ENCODE measurements at regions of chr1 and their contacts with region 1.

Region 1: DNA sequence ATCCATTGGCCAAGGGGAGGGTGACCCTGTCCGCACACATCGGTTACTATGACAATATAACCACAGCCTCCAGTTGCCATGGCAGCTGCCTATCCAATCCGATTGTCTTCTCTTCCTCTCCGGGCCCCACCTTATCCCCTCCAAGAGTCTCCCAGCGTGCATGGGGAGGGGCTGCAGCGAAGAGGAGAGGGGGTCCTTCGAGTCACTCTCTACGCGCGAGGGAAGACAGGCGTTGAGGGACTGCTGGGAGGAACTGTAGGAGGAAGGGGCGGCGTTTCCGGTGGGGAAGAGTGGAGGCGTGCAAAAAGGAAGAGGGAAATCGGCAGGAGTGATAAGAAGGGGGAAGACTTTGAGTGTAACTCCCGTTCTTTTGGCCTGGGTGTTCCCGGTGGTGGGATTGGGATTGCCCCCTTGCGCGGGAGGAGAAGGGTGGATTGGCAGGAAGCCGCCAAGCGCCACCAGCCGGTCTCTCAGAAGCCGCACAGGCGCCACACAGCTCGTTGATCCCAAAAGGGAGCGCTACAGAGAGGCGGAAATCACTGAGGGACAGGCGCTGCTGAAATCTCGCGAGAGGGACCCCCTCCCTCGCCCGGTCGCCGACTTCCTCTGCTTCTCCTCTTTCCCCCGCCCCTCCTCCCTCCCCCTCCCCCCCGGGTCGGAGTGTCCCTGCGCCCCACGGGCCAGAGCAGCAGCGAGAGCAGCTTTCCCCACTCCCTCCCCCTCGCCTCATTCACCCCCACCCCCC is 384 bp upstream of the SMG7 start:
- DNase-seq: peak; percentile 98
- ATAC-seq: peak; percentile 70
- H3K4me3 ChIP-seq: peak overlapping the region; percentile 73 to 89 (median 86)
- H3K4me3 Mint-ChIP-seq: peak overlapping the region; percentile 99
- H3K27ac ChIP-seq: peak overlapping the region; percentile 90 to 99
- H3K27ac Mint-ChIP-seq: peak overlapping the region; percentile 100
- H3K4me1 ChIP-seq: peaks cover 12 to 28% of the 10 kb centered on the region in 2 donors
- H3K4me1 Mint-ChIP-seq: peaks cover 35% of the 10 kb centered on the region
- H3K27me3 ChIP-seq: no peaks in the 10 kb centered on the region
- H3K27me3 Mint-ChIP-seq: no peaks in the 10 kb centered on the region
- CTCF ChIP-seq: no peak

Region 2: GRCh38 chr1:182839209-182840065 is 632.5 kb before region 1 on chr1 and contains the start of gene DHX9:
- CTCF ChIA-PET with region 1: no interaction called
- POLR2A ChIA-PET with region 1: no interaction called
- intact Hi-C with region 1: loop called (anchors 2 kb)
- DNase-seq: peak; percentile 97
- ATAC-seq: peak; percentile 80
- H3K4me3 ChIP-seq: peak within 1 kb of the TSS; percentile 85 to 92 (median 92)
- H3K4me3 Mint-ChIP-seq: peak within 1 kb of the TSS; percentile 92
- H3K27ac ChIP-seq: peak within 1 kb of the TSS; percentile 81 to 85
- H3K27ac Mint-ChIP-seq: peak within 1 kb of the TSS; percentile 97
- H3K4me1 ChIP-seq: peaks cover 22 to 28% of the 10 kb centered on the region in 2 donors
- H3K4me1 Mint-ChIP-seq: peaks cover 35% of the 10 kb centered on the region
- H3K27me3 ChIP-seq: no peaks in the 10 kb centered on the region
- H3K27me3 Mint-ChIP-seq: no peaks in the 10 kb centered on the region
- CTCF ChIP-seq: peak; percentile 43
- total RNA-seq, gene DHX9: 207 and 213 TPM in 2 replicates

Region 3: DNA sequence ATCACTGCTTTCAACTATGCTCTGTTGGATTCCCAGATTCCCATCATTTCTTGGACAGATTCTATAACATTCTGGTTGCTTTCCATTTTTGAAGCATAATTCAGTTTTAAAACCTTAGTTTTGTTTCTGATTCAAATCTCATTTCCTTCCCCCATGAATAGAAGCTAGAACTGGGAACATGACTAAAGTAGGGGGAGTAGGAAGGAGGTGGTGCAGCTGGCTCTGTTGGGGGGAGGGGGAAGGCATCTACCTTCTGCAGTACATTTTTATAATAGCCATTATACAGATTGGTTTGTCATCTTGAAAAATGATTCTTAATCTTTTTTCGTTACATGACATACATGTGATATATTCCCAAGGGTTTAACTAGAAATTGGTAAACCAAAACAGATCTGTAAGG is 48.5 kb after region 1 on chr1:
- CTCF ChIA-PET with region 1: interaction called, 7 read pairs
- POLR2A ChIA-PET with region 1: no interaction called
- intact Hi-C with region 1: loop called (anchors 2 kb)
- DNase-seq: no peak
- ATAC-seq: no peak
- H3K4me3 ChIP-seq: no peak overlapping the region
- H3K4me3 Mint-ChIP-seq: no peak overlapping the region
- H3K27ac ChIP-seq: no peak overlapping the region
- H3K27ac Mint-ChIP-seq: no peak overlapping the region
- H3K4me1 ChIP-seq: no peaks in the 10 kb centered on the region
- H3K4me1 Mint-ChIP-seq: no peaks in the 10 kb centered on the region
- H3K27me3 ChIP-seq: no peaks in the 10 kb centered on the region
- H3K27me3 Mint-ChIP-seq: no peaks in the 10 kb centered on the region
- CTCF ChIP-seq: no peak

Region 4: DNA sequence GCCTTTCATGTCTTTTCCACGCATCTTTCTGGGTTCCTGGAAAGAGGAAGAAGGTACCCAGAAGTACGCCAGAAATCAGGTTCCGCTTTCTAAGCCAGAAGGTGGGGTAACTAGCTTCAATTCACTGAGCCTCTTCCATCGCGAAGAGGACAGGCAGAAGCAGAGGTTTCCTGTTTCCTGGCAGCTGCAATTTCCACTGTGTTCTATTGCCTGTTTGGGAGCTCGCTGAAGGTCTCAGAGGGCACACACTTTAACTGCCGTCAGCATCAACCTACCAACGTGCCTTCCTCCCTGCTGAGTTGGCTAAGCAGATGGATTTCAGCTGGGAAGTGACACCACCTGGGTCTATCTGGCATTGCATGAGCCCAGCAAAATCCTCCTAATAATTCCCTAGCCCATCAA is 108.4 kb after region 1 on chr1:
- CTCF ChIA-PET with region 1: interaction called, 3 read pairs
- POLR2A ChIA-PET with region 1: interaction called, 6 read pairs
- intact Hi-C with region 1: loop called (anchors 2 kb)
- DNase-seq: peak; percentile 85
- ATAC-seq: peak; percentile 89
- H3K4me3 ChIP-seq: peak overlapping the region in 3 of 5 experiments; percentile 5 to 34 (median 10)
- H3K4me3 Mint-ChIP-seq: peak overlapping the region; percentile 83
- H3K27ac ChIP-seq: peak overlapping the region; percentile 66 to 69
- H3K27ac Mint-ChIP-seq: peak overlapping the region; percentile 97
- H3K4me1 ChIP-seq: peaks cover 26 to 32% of the 10 kb centered on the region in 2 donors
- H3K4me1 Mint-ChIP-seq: peaks cover 23% of the 10 kb centered on the region
- H3K27me3 ChIP-seq: no peaks in the 10 kb centered on the region
- H3K27me3 Mint-ChIP-seq: no peaks in the 10 kb centered on the region
- CTCF ChIP-seq: no peak

Region 5: GRCh38 chr1:183622884-183623785 is 151.2 kb after region 1 on chr1:
- CTCF ChIA-PET with region 1: interaction called, 18 read pairs
- POLR2A ChIA-PET with region 1: no interaction called
- intact Hi-C with region 1: loop called (anchors 1 kb)
- DNase-seq: peak; percentile 80
- ATAC-seq: peak; percentile 96
- H3K4me3 ChIP-seq: no peak overlapping the region
- H3K4me3 Mint-ChIP-seq: no peak overlapping the region
- H3K27ac ChIP-seq: peak overlapping the region in 1 of 2 donors; percentile 44
- H3K27ac Mint-ChIP-seq: peak overlapping the region; percentile 42
- H3K4me1 ChIP-seq: peaks cover 2 to 9% of the 10 kb centered on the region in 2 donors
- H3K4me1 Mint-ChIP-seq: peaks cover 20% of the 10 kb centered on the region
- H3K27me3 ChIP-seq: no peaks in the 10 kb centered on the region
- H3K27me3 Mint-ChIP-seq: no peaks in the 10 kb centered on the region
- CTCF ChIP-seq: peak; percentile 80

Region 6: GRCh38 chr1:183901748-183902330 is 429.9 kb after region 1 on chr1:
- CTCF ChIA-PET with region 1: no interaction called
- POLR2A ChIA-PET with region 1: no interaction called
- intact Hi-C with region 1: loop called (anchors 5 kb)
- DNase-seq: no peak
- ATAC-seq: peak; percentile 36
- H3K4me3 ChIP-seq: no peak overlapping the region
- H3K4me3 Mint-ChIP-seq: no peak overlapping the region
- H3K27ac ChIP-seq: no peak overlapping the region
- H3K27ac Mint-ChIP-seq: peak overlapping the region; percentile 5
- H3K4me1 ChIP-seq: peaks cover 9% of the 10 kb centered on the region in 2 donors
- H3K4me1 Mint-ChIP-seq: peaks cover 19% of the 10 kb centered on the region
- H3K27me3 ChIP-seq: no peaks in the 10 kb centered on the region
- H3K27me3 Mint-ChIP-seq: no peaks in the 10 kb centered on the region
- CTCF ChIP-seq: no peak

Region 7: GRCh38 chr1:184754476-184755225 is 1282.7 kb after region 1 on chr1 and contains the start of gene EDEM3:
- CTCF ChIA-PET with region 1: no interaction called
- POLR2A ChIA-PET with region 1: no interaction called
- intact Hi-C with region 1: loop called (anchors 10 kb)
- DNase-seq: peak; percentile 98
- ATAC-seq: peak; percentile 94
- H3K4me3 ChIP-seq: peak within 1 kb of the TSS; percentile 76 to 98 (median 93)
- H3K4me3 Mint-ChIP-seq: peak within 1 kb of the TSS; percentile 95
- H3K27ac ChIP-seq: peak within 1 kb of the TSS; percentile 68 to 86
- H3K27ac Mint-ChIP-seq: peak within 1 kb of the TSS; percentile 94
- H3K4me1 ChIP-seq: peaks cover 16% of the 10 kb centered on the region in 2 donors
- H3K4me1 Mint-ChIP-seq: peaks cover 26% of the 10 kb centered on the region
- H3K27me3 ChIP-seq: peaks cover 0 to 7% (median 1%) of the 10 kb centered on the region in 4 experiments
- H3K27me3 Mint-ChIP-seq: peaks cover 9% of the 10 kb centered on the region
- CTCF ChIP-seq: no peak
- total RNA-seq, gene EDEM3: 20.9 and 23.1 TPM in 2 replicates

Measured in B cell (primary cell).